Activated CD8-positive, alpha-beta T cell treated with anti-CD3 and anti-CD28 coated beads for 36 hours (primary cell): ENCODE measurements at regions of chrX and their contacts with region 1.

Region 1: GRCh38 chrX:154490414-154491083 is at the start of gene SLC10A3:
- DNase-seq: peak; percentile 91
- ATAC-seq: peak; percentile 87
- H3K4me3 Mint-ChIP-seq: peak within 1 kb of the TSS; percentile 89
- H3K27ac Mint-ChIP-seq: peak within 1 kb of the TSS; percentile 90
- H3K4me1 Mint-ChIP-seq: peaks cover 19% of the 10 kb centered on the region
- H3K27me3 Mint-ChIP-seq: no peaks in the 10 kb centered on the region
- CTCF ChIP-seq: no peak
- total RNA-seq, gene SLC10A3: 13.2 to 14.1 TPM

Region 2: DNA sequence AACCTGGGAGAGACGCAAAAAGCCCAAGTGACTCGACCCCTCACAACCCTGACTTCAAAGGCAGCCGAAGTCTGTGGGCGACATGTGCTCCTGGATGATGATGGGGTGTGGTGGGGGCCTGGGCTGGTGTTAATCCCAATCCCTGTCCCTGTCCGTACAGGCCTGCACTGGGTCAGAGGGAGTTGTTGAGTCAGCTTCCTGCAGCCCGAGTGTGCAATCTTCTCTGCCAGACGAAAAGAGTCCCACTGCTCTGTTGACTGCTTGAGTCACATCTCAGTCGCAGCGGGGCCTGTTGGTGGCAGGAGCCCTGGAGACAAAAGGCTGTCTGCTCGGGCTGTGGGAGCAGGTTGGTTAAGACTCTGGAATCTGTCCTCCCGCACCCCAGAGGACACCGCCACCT is 15.2 kb after region 1 on chrX:
- CTCF ChIA-PET with region 1: no interaction called
- POLR2A ChIA-PET with region 1: no interaction called
- intact Hi-C with region 1: no loop called
- DNase-seq: no peak
- ATAC-seq: no peak
- H3K4me3 Mint-ChIP-seq: no peak overlapping the region
- H3K27ac Mint-ChIP-seq: no peak overlapping the region
- H3K4me1 Mint-ChIP-seq: peaks cover 5% of the 10 kb centered on the region
- H3K27me3 Mint-ChIP-seq: no peaks in the 10 kb centered on the region
- CTCF ChIP-seq: no peak

Region 3: GRCh38 chrX:154534862-154535670 is 44.5 kb after region 1 on chrX:
- CTCF ChIA-PET with region 1: interaction called, 3 read pairs
- POLR2A ChIA-PET with region 1: no interaction called
- intact Hi-C with region 1: loop called (anchors 2 kb)
- DNase-seq: peak; percentile 89
- ATAC-seq: peak; percentile 98
- H3K4me3 Mint-ChIP-seq: no peak overlapping the region
- H3K27ac Mint-ChIP-seq: peak overlapping the region; percentile 61
- H3K4me1 Mint-ChIP-seq: peaks cover 19% of the 10 kb centered on the region
- H3K27me3 Mint-ChIP-seq: no peaks in the 10 kb centered on the region
- CTCF ChIP-seq: peak; percentile 92